PC-3 (cell line): ENCODE measurements at regions of chr3 and their contacts with region 1.

Region 1: DNA sequence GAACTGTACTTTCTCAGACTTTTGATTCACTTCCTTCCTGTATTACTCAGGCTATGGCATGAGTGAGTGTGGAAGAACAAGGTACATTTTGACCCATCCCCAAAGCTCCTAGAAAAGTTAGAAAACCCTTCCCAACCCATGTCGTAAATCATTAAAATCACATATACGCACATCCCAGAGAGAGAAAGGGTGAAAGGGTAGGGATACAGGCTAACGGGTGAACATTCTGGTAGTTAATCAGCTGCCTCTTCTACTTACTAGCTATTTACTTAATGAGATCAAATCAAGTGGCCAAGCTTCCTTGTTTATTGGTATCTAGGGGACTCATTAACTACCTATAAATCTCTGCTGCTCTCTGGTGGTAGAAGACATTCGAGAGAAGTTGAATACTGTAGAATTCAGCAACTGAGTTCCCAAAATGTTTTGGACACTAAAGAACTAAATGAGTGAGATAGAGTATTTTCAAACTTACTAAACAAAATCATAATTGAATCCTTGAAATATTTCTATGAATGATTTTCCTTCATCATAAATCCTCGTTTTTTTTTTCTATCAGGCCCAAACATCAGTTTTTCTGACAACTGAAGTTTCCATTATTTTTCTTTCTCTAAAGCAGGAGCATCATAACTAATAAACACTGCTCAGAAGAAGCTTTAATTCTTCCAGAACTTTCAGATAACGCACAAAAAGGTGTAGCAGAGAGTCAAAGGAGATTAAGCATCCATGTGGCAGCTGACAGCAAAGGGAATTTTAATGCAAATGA is 124.2 kb downstream of the IMPG2 start:
- DNase-seq: peak; percentile 91
- ATAC-seq: peak; percentile 81
- H3K4me3 ChIP-seq: no peak overlapping the region
- H3K27ac ChIP-seq: peak overlapping the region; percentile 79
- H3K4me1 ChIP-seq: peaks cover 39% of the 10 kb centered on the region
- H3K27me3 ChIP-seq: no peaks in the 10 kb centered on the region
- CTCF ChIP-seq: peak; percentile 96

Region 2: GRCh38 chr3:100463002-100463401 is 733.1 kb before region 1 on chr3:
- CTCF ChIA-PET with region 1: interaction called, 6 read pairs
- POLR2A ChIA-PET with region 1: no interaction called
- intact Hi-C with region 1: loop called (anchors 1 kb)
- DNase-seq: peak; percentile 79
- ATAC-seq: peak; percentile 94
- H3K4me3 ChIP-seq: no peak overlapping the region; the same call in 1 of the 2 replicates
- H3K27ac ChIP-seq: no peak overlapping the region
- H3K4me1 ChIP-seq: peaks cover 11% of the 10 kb centered on the region
- H3K27me3 ChIP-seq: no peaks in the 10 kb centered on the region
- CTCF ChIP-seq: peak; percentile 93

Region 3: GRCh38 chr3:100737334-100737733 is 458.8 kb before region 1 on chr3:
- CTCF ChIA-PET with region 1: interaction called, 3 read pairs
- POLR2A ChIA-PET with region 1: no interaction called
- intact Hi-C with region 1: loop called (anchors 1 kb)
- DNase-seq: peak; percentile 51
- ATAC-seq: peak; percentile 80
- H3K4me3 ChIP-seq: no peak overlapping the region
- H3K27ac ChIP-seq: no peak overlapping the region
- H3K4me1 ChIP-seq: no peaks in the 10 kb centered on the region
- H3K27me3 ChIP-seq: no peaks in the 10 kb centered on the region
- CTCF ChIP-seq: peak; percentile 79

Region 4: GRCh38 chr3:100825574-100825973 is 370.6 kb before region 1 on chr3:
- CTCF ChIA-PET with region 1: interaction called, 18 read pairs
- POLR2A ChIA-PET with region 1: no interaction called
- intact Hi-C with region 1: loop called (anchors 1 kb)
- DNase-seq: peak; percentile 10
- ATAC-seq: no peak
- H3K4me3 ChIP-seq: no peak overlapping the region
- H3K27ac ChIP-seq: no peak overlapping the region
- H3K4me1 ChIP-seq: no peaks in the 10 kb centered on the region
- H3K27me3 ChIP-seq: no peaks in the 10 kb centered on the region
- CTCF ChIP-seq: no peak

Region 5: GRCh38 chr3:100899440-100900091 is 296.6 kb before region 1 on chr3:
- CTCF ChIA-PET with region 1: interaction called, 4 read pairs
- POLR2A ChIA-PET with region 1: no interaction called
- intact Hi-C with region 1: loop called (anchors 2 kb)
- DNase-seq: peak; percentile 89
- ATAC-seq: peak; percentile 66
- H3K4me3 ChIP-seq: peak overlapping the region; percentile 32
- H3K27ac ChIP-seq: peak overlapping the region; percentile 92
- H3K4me1 ChIP-seq: peaks cover 64% of the 10 kb centered on the region
- H3K27me3 ChIP-seq: no peaks in the 10 kb centered on the region
- CTCF ChIP-seq: no peak

Region 6: DNA sequence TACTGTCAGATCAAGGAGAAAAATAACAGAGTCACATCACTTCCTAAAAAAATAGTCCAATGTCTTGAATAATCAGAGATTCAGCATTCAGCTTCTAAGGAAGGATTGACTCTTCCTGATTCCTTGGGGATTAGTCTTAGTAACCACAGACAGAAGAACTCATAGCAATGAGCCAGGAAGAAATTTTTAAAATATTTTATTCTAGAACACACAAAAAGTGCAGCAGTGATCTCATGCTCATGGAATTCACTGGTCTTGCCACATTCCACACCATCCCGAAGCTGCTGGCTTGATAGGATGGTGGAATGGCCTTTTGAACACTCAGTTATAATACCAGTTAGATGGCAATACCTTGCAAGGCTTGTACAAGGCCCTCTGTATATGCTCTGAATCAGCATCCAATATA is 159.9 kb before region 1 on chr3:
- CTCF ChIA-PET with region 1: interaction called, 3 read pairs
- POLR2A ChIA-PET with region 1: no interaction called
- intact Hi-C with region 1: loop called (anchors 1 kb)
- DNase-seq: peak; percentile 99
- ATAC-seq: peak; percentile 96
- H3K4me3 ChIP-seq: 0 out of 2 replicates have a peak overlapping the region, but pooled peaks have one; percentile 0
- H3K27ac ChIP-seq: peak overlapping the region; percentile 65
- H3K4me1 ChIP-seq: peaks cover 45% of the 10 kb centered on the region
- H3K27me3 ChIP-seq: no peaks in the 10 kb centered on the region
- CTCF ChIP-seq: no peak

Region 7: DNA sequence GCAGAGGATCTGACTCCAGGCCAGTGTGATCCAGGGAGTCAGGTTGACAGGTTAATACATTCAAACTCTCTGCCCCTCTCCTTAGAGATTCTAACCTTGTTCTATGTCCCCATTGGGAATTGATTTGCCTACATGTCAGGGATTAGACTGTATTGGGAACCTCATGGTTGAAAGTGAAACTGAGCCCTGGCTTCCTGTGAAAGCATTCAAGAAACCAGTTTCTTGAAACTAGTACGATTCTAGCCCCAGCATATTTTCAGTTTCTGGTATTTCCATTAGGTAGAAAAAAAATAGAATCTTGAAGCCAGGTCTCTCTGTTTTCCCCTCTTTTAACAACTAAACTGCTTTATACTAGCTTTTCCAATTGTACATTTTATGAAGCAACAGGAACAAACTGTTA is 62.5 kb before region 1 on chr3:
- CTCF ChIA-PET with region 1: no interaction called
- POLR2A ChIA-PET with region 1: no interaction called
- intact Hi-C with region 1: no loop called
- DNase-seq: no peak
- ATAC-seq: no peak
- H3K4me3 ChIP-seq: no peak overlapping the region
- H3K27ac ChIP-seq: no peak overlapping the region
- H3K4me1 ChIP-seq: peaks cover 2% of the 10 kb centered on the region; the same call in 1 of the 2 replicates
- H3K27me3 ChIP-seq: no peaks in the 10 kb centered on the region
- CTCF ChIP-seq: no peak

Region 8: GRCh38 chr3:101381809-101382208 is 185.7 kb after region 1 on chr3:
- CTCF ChIA-PET with region 1: interaction called, 21 read pairs
- POLR2A ChIA-PET with region 1: no interaction called
- intact Hi-C with region 1: loop called (anchors 1 kb)
- DNase-seq: peak; percentile 76
- ATAC-seq: peak; percentile 79
- H3K4me3 ChIP-seq: no peak overlapping the region
- H3K27ac ChIP-seq: no peak overlapping the region
- H3K4me1 ChIP-seq: no peaks in the 10 kb centered on the region
- H3K27me3 ChIP-seq: no peaks in the 10 kb centered on the region
- CTCF ChIP-seq: peak; percentile 82